CD14-positive monocyte (primary cell): ENCODE measurements at regions of chr6 and their contacts with region 1.

Region 1: DNA sequence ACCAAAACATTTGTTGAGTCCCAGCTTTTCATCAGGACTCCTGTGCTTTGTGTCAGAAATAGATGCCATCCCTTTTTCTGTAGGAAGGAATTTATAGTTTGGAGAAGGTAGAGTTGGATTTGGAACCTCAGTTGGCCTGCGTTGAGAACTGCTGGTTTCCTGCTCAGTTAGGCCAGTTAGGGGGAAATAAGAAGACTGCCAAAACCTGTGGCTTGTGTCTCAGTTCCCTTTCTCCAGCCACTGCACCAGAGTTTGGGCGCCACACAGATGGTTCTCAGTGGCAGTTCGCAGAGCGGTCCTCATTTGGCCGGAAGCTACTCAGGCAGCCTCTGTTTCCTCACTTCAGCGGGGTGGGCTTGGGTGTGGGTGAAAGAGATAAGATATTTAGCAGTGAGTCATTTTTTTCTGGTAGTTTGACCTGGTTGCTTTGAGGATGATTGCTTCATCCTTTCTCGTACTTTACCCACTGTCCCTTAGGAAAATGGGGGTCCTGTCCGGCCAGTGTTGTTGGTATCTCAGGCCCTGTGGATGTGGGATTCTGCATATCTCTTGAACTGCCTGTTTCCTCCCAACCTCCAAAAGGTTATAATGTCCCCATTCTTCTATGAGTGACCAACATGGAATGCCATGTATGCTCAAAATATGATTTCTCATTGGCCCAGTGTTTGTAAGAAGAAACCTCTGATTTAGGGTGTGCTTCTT is 53.7 kb downstream of the JARID2 start:
- DNase-seq: peak; percentile 46 to 72 (median 60)
- H3K4me3 ChIP-seq: peak overlapping the region in 1 of 3 experiments; percentile 42
- H3K4me3 Mint-ChIP-seq: peak overlapping the region; percentile 52 to 58
- H3K27ac ChIP-seq: peak overlapping the region; percentile 22 to 60
- H3K27ac Mint-ChIP-seq: peak overlapping the region; percentile 70 to 89 (median 84)
- H3K4me1 ChIP-seq: peaks cover 60 to 84% of the 10 kb centered on the region in 2 donors
- H3K4me1 Mint-ChIP-seq: peaks cover 85% of the 10 kb centered on the region
- H3K27me3 ChIP-seq: no peaks in the 10 kb centered on the region
- H3K27me3 Mint-ChIP-seq: no peaks in the 10 kb centered on the region
- CTCF ChIP-seq: no peak

Region 2: DNA sequence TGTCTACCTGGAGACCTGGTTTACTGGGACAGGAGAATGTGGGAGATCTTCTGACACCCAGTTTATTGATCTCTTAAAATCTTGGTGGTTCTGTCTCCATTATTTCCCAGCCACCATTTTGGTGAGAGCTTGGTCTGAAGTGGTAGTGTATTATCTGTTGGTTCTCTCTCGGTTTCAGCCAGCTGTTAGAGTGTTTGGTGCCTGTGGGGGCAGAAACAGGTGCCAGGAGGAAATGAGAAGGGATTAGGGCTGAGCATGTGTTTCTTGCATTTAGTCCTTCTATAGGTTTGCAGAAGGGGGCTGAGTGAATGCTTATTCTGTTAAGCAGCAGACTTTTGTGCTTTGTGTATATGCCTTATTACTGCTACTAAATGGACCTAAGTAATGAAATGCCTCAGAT is 44.1 kb before region 1 on chr6:
- intact Hi-C with region 1: loop called in 1 of 2 experiments (anchors 5 kb)
- DNase-seq: no peak
- H3K4me3 ChIP-seq: no peak overlapping the region
- H3K4me3 Mint-ChIP-seq: peak overlapping the region in 1 of 2 donors; percentile 34
- H3K27ac ChIP-seq: no peak overlapping the region
- H3K27ac Mint-ChIP-seq: peak overlapping the region; percentile 63 to 82 (median 74)
- H3K4me1 ChIP-seq: peaks cover 67 to 88% of the 10 kb centered on the region in 2 donors
- H3K4me1 Mint-ChIP-seq: peaks cover 99% of the 10 kb centered on the region
- H3K27me3 ChIP-seq: no peaks in the 10 kb centered on the region
- H3K27me3 Mint-ChIP-seq: no peaks in the 10 kb centered on the region
- CTCF ChIP-seq: no peak

Region 3: DNA sequence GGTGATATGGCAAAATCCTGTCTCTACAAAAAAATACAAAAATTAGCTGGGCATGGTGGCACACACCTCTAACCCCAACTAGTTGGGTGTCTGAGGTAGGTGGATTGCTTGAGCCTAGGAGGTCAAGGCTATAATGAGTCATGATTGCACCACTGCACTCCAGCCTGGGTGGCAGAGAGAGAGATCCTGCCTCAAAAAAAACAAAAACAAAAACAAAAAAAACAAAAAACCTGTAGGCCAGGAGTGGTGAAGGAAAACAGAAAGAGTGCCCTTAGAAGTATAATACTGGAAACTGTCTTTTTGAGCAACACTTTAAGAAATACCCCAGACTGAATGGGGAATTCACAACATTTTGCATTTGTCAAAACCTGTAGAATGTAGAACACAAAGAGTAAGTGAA is 31.6 kb after region 1 on chr6:
- intact Hi-C with region 1: loop called in 1 of 2 experiments (anchors 5 kb)
- DNase-seq: peak; percentile 39 to 80 (median 46)
- H3K4me3 ChIP-seq: no peak overlapping the region
- H3K4me3 Mint-ChIP-seq: peak overlapping the region in 1 of 2 donors; percentile 43
- H3K27ac ChIP-seq: peak overlapping the region in 1 of 2 donors; percentile 23
- H3K27ac Mint-ChIP-seq: peak overlapping the region; percentile 72 to 88 (median 83)
- H3K4me1 ChIP-seq: peaks cover 55 to 75% of the 10 kb centered on the region in 2 donors
- H3K4me1 Mint-ChIP-seq: peaks cover 90% of the 10 kb centered on the region
- H3K27me3 ChIP-seq: no peaks in the 10 kb centered on the region
- H3K27me3 Mint-ChIP-seq: no peaks in the 10 kb centered on the region
- CTCF ChIP-seq: no peak

Region 4: DNA sequence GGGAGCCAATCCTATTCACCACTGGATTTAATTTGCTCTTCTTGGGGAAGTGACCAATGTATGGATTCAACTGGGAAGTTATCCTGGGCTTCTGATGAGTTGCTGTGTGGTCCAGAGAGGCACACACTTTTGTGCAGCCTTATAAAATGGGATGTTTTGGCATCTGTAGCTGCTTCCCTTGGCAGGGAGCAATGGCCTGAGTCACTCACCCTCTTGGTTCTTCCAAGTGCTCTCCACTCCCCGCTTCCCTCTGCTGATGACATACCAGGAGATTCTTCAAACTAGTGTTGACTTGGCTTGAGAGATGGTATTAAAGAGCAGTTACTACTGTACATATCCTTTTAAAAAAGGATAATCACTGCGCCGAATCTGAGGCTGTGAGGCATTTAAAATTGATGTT is 52.0 kb after region 1 on chr6:
- intact Hi-C with region 1: loop called in 1 of 2 experiments (anchors 10 kb)
- DNase-seq: peak in 1 of 3 donors; percentile 63
- H3K4me3 ChIP-seq: no peak overlapping the region
- H3K4me3 Mint-ChIP-seq: no peak overlapping the region
- H3K27ac ChIP-seq: peak overlapping the region in 1 of 2 donors; percentile 66
- H3K27ac Mint-ChIP-seq: peak overlapping the region in 6 of 7 donors; percentile 1 to 86 (median 20)
- H3K4me1 ChIP-seq: peaks cover 61% of the 10 kb centered on the region in 2 donors
- H3K4me1 Mint-ChIP-seq: peaks cover 88% of the 10 kb centered on the region
- H3K27me3 ChIP-seq: no peaks in the 10 kb centered on the region
- H3K27me3 Mint-ChIP-seq: peaks cover 0 to 2% (median 0%) of the 10 kb centered on the region in 3 donors
- CTCF ChIP-seq: no peak

Region 5: DNA sequence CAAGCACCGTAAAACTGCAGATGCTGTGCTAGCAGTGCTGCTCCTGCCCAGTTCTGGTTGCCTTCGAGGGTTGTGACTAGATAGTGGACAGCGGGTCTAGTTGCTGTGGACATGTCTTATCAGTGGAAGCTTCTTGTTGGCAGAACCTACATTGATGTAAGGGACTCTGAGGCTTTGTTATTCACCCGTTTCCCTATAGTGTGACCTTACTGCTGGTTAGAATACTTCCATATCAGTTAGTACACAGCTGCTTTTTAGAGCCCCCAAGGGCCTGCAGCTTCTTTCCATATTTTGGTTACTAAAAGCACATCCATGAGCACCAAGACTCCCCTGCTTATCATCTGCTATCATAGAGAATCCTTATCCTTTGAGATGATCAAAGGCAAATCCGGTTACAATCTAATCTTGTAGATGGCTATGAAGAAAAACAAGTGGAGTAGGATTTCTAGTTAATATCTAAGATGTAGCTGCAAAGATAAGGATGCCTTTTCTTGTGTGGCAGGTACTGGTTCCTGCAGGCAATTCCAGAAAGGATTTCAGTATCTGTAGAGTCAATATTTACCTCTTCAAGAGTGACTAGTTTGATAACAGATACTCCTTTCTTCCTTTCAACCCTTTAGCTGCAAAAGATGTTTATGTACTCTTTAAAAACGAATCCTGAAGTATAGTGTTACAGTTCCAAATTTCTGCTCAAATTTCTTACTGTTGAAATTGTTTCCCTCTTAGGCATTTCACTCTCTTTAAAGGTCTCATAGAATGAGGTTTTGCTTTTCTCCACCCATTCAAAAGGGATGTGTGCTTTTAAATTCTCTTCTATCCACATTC is 109.9 kb after region 1 on chr6:
- intact Hi-C with region 1: no loop called
- DNase-seq: no peak
- H3K4me3 ChIP-seq: no peak overlapping the region
- H3K4me3 Mint-ChIP-seq: no peak overlapping the region
- H3K27ac ChIP-seq: peak overlapping the region in 1 of 2 donors; percentile 2
- H3K27ac Mint-ChIP-seq: peak overlapping the region in 1 of 7 donors; percentile 75
- H3K4me1 ChIP-seq: peaks cover 17 to 33% of the 10 kb centered on the region in 2 donors
- H3K4me1 Mint-ChIP-seq: peaks cover 72% of the 10 kb centered on the region
- H3K27me3 ChIP-seq: no peaks in the 10 kb centered on the region
- H3K27me3 Mint-ChIP-seq: peaks cover 0 to 2% (median 0%) of the 10 kb centered on the region in 3 donors
- CTCF ChIP-seq: no peak

Region 6: GRCh38 chr6:15420959-15421438 is 121.4 kb after region 1 on chr6:
- intact Hi-C with region 1: no loop called
- DNase-seq: peak in 2 of 3 donors; percentile 64 to 75
- H3K4me3 ChIP-seq: peak overlapping the region in 1 of 3 experiments; percentile 40
- H3K4me3 Mint-ChIP-seq: peak overlapping the region; percentile 20 to 70
- H3K27ac ChIP-seq: peak overlapping the region; percentile 54 to 72
- H3K27ac Mint-ChIP-seq: peak overlapping the region; percentile 82 to 92 (median 89)
- H3K4me1 ChIP-seq: peaks cover 35 to 53% of the 10 kb centered on the region in 2 donors
- H3K4me1 Mint-ChIP-seq: peaks cover 67% of the 10 kb centered on the region
- H3K27me3 ChIP-seq: no peaks in the 10 kb centered on the region
- H3K27me3 Mint-ChIP-seq: peaks cover 0 to 1% (median 0%) of the 10 kb centered on the region in 3 donors
- CTCF ChIP-seq: no peak